ENCODE measurements at regions of chr12 and their contacts with region 1.

Region 1: GRCh38 chr12:51590347-51591019 is 550 bp upstream of the SCN8A start:
- DNase-seq: no peak
- H3K4me3 ChIP-seq: peak overlapping the region; percentile 90
- CTCF ChIP-seq: peak; percentile 73

Region 2: DNA sequence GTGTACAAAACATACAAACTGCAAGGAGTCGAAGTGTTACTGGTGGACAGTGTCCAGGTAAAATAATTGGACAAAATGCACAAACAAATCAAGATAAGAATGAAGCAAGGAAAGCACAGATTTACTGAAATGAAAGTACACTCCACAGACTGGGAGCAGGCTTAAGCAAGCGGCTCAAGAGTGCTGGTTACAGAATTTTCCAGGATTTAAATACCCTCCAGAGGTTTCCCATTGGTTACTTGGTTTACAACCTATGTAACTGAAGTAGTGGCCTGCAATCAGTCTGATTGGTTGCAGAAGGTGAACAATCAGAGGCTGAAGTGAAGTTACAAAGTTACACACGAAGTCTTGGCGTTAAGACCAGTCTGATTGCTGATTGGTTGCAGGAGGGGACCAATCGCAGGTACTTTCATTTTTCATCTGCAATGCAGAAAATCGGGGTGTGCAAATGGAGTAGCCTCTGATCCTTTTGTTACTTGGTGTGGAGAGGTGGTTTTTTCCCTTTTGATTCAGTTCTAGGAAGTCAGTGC is 11.1 kb before region 1 on chr12:
- CTCF ChIA-PET with region 1: interaction called, 10 read pairs
- POLR2A ChIA-PET with region 1: no interaction called
- DNase-seq: no peak
- H3K4me3 ChIP-seq: no peak overlapping the region
- CTCF ChIP-seq: no peak